ENCODE measurements at regions of chr15 and their contacts with region 1.

Region 1: GRCh38 chr15:88202231-88202630 is 54.3 kb downstream of the NTRK3 start:
- DNase-seq: peak in 1 of 10 donors; percentile 32
- H3K4me3 ChIP-seq: no peak overlapping the region
- H3K27ac ChIP-seq: no peak overlapping the region
- H3K27me3 ChIP-seq: no peaks in the 10 kb centered on the region
- CTCF ChIP-seq: no peak

Region 2: DNA sequence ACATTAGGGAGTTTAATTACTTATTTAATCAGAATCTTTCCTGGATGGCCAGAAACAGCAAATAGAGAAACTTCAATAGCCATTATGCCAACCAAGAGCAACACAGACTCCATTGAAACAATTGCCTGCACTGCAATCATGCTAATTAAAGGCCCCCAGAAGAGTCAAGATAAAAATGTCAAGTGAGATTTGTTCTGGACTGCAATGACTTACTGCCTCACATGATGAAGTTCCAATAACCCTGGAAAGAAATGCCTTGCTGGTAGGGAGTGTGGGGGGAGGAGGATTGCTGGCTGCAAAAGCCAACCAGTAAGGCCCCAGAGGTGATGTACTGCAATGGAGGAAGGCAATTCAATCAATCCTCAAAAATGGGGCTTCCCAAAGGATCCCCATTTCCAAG is 203.6 kb before region 1 on chr15:
- intact Hi-C with region 1: no loop called
- DNase-seq: no peak
- H3K4me3 ChIP-seq: no peak overlapping the region
- H3K27ac ChIP-seq: no peak overlapping the region
- H3K27me3 ChIP-seq: no peaks in the 10 kb centered on the region
- CTCF ChIP-seq: no peak

Region 3: GRCh38 chr15:88139936-88140335 is 62.3 kb before region 1 on chr15:
- intact Hi-C with region 1: loop called in 1 of 2 experiments (anchors 10 kb)
- DNase-seq: no peak
- H3K4me3 ChIP-seq: no peak overlapping the region
- H3K27ac ChIP-seq: peak overlapping the region in 2 of 59 donors; percentile 11 to 22
- H3K27me3 ChIP-seq: no peaks in the 10 kb centered on the region
- CTCF ChIP-seq: no peak